ENCODE measurements at regions of chr2 and their contacts with region 1.

Region 1: DNA sequence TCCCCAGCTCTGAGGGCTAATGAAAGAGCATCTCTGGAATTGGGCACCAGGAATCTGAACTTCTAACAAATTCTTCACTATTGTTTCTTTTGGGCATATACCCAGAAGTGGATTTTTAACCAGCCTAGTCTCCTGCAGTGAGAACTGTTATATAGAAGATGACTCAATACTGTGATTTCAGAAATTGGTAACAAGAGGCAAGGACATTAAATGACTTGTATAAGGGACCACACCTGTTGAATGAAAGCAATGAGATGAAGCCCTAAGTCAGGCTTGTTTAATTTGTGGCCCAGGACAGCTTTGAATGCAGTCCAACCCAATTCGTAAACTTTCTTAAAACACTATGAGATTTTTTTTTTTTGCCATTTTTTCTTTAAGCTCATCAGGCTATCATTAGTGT is 57.9 kb downstream of the EPC2 start:
- DNase-seq: no peak
- ATAC-seq: no peak
- H3K4me3 ChIP-seq: no peak overlapping the region
- H3K27ac ChIP-seq: no peak overlapping the region
- H3K4me1 ChIP-seq: no peaks in the 10 kb centered on the region
- H3K27me3 ChIP-seq: no peaks in the 10 kb centered on the region
- CTCF ChIP-seq: no peak
- POLR2A ChIP-seq: no peak
- RAD21 ChIP-seq: no peak

Region 2: GRCh38 chr2:147980940-147981528 is 721.4 kb before region 1 on chr2:
- CTCF ChIA-PET with region 1: no interaction called
- POLR2A ChIA-PET with region 1: interaction called, 16 read pairs
- dilution Hi-C with region 1: no loop called
- in situ Hi-C with region 1: no loop called
- intact Hi-C with region 1: no loop called
- DNase-seq: no peak
- ATAC-seq: no peak
- H3K4me3 ChIP-seq: no peak overlapping the region
- H3K27ac ChIP-seq: no peak overlapping the region
- H3K4me1 ChIP-seq: no peaks in the 10 kb centered on the region
- H3K27me3 ChIP-seq: no peaks in the 10 kb centered on the region
- CTCF ChIP-seq: no peak
- POLR2A ChIP-seq: no peak
- RAD21 ChIP-seq: no peak

Region 3: DNA sequence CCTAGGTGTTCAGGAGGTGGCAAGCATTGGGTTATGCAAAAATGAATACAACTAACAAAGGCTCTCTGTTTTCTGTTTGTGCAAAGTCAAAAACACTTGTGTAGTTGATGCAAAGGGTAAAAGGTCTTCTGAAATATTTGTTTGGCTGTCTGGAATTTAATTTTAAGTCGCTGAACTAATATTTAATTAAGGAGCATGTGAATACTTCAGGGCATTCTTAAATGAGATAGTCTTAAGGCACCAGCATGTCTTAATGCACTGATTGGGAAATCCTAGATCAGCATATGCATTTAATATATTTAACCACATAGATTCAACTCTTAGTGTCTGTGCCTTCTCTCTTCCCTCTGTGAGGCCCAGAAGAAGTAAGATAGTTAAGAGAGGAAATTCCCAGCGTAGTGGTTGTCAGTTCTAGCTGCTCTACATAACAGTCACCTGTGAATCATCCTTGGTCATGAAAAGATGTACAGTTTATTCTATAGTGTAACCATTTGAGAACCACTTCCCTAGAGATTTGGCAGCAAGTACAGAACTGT is 54.0 kb after region 1 on chr2:
- CTCF ChIA-PET with region 1: no interaction called
- POLR2A ChIA-PET with region 1: interaction called, 11 read pairs
- dilution Hi-C with region 1: no loop called
- in situ Hi-C with region 1: no loop called
- intact Hi-C with region 1: no loop called
- DNase-seq: peak; percentile 92
- ATAC-seq: peak; percentile 90
- H3K4me3 ChIP-seq: no peak overlapping the region
- H3K27ac ChIP-seq: no peak overlapping the region
- H3K4me1 ChIP-seq: peaks cover 3% of the 10 kb centered on the region
- H3K27me3 ChIP-seq: no peaks in the 10 kb centered on the region
- CTCF ChIP-seq: no peak
- POLR2A ChIP-seq: no peak
- RAD21 ChIP-seq: no peak

Measured in IMR-90 (cell line).